ENCODE measurements at regions of chr12 and their contacts with region 1.

Region 1: GRCh38 chr12:19683178-19683927 is 244.1 kb downstream of the AEBP2 start:
- DNase-seq: no peak
- H3K4me3 ChIP-seq: no peak overlapping the region
- H3K27ac ChIP-seq: no peak overlapping the region
- H3K4me1 ChIP-seq: no peaks in the 10 kb centered on the region
- H3K27me3 ChIP-seq: no peaks in the 10 kb centered on the region
- CTCF ChIP-seq: no peak
- POLR2A ChIP-seq: no peak

Region 2: DNA sequence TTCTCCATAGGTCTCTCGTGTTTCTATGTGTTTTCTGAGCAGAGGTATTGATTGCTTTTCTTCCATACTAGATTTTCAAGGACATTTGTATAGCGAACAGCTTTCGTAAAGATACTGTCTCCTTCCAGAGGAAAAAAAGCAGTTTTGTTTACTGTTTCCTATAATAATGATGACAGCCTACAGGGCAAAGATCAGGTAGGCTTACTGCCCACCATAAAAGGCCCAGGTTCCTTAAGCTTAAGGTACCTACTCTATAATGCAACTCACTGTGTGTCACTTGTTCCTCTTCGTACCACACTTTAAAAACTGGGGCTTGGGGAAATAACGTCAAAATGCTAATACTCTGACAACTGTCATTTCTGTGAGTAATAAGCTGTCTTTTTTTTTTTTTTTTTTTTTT is 952.2 kb before region 1 on chr12:
- intact Hi-C with region 1: loop called (anchors 5 kb)
- DNase-seq: no peak
- H3K4me3 ChIP-seq: no peak overlapping the region
- H3K27ac ChIP-seq: no peak overlapping the region
- H3K4me1 ChIP-seq: no peaks in the 10 kb centered on the region
- H3K27me3 ChIP-seq: no peaks in the 10 kb centered on the region
- CTCF ChIP-seq: no peak
- POLR2A ChIP-seq: no peak

Region 3: GRCh38 chr12:19431407-19432308 is 251.7 kb before region 1 on chr12:
- intact Hi-C with region 1: no loop called
- DNase-seq: no peak
- H3K4me3 ChIP-seq: no peak overlapping the region
- H3K27ac ChIP-seq: peak overlapping the region in 1 of 2 donors; percentile 67
- H3K4me1 ChIP-seq: no peaks in the 10 kb centered on the region
- H3K27me3 ChIP-seq: no peaks in the 10 kb centered on the region
- CTCF ChIP-seq: no peak
- POLR2A ChIP-seq: no peak

Region 4: GRCh38 chr12:19665121-19665900 is 18.0 kb before region 1 on chr12:
- intact Hi-C with region 1: no loop called
- DNase-seq: no peak
- H3K4me3 ChIP-seq: no peak overlapping the region
- H3K27ac ChIP-seq: no peak overlapping the region
- H3K4me1 ChIP-seq: no peaks in the 10 kb centered on the region
- H3K27me3 ChIP-seq: no peaks in the 10 kb centered on the region
- CTCF ChIP-seq: no peak
- POLR2A ChIP-seq: no peak

Measured in breast epithelium (tissue), 4 donors.